ENCODE measurements at regions of chr17 and their contacts with region 1.

Region 1: GRCh38 chr17:41322094-41322902 is 6.8 kb upstream of the KRTAP17-1 start:
- DNase-seq: no peak
- ATAC-seq: peak; percentile 81
- H3K4me3 Mint-ChIP-seq: no peak overlapping the region
- H3K27ac Mint-ChIP-seq: no peak overlapping the region
- H3K4me1 Mint-ChIP-seq: peaks cover 28% of the 10 kb centered on the region
- H3K27me3 Mint-ChIP-seq: no peaks in the 10 kb centered on the region

Region 2: DNA sequence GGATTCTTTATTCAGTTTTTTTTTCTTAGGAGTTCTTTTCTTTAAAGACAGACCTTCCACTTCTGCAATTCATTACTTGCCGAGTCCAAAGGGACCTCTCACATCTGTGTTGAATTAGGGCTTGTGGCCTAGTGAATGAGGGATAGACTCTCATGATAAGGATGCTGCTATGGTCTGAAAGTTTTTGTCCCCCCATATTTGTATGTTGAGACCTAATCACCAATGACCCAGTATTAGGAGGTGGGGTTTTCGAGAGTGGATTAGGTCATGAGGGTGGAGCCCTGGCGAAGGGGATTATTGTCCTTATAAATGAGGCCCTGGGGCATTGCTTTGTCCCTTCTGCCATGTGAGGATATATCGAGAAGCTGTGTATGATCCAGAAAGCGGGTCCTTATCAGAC is 464.8 kb before region 1 on chr17:
- CTCF ChIA-PET with region 1: interaction called, 3 read pairs
- POLR2A ChIA-PET with region 1: no interaction called
- intact Hi-C with region 1: loop called in 1 of 2 experiments (anchors 5 kb)
- DNase-seq: no peak
- ATAC-seq: no peak
- H3K4me3 Mint-ChIP-seq: no peak overlapping the region
- H3K27ac Mint-ChIP-seq: no peak overlapping the region
- H3K4me1 Mint-ChIP-seq: no peaks in the 10 kb centered on the region
- H3K27me3 Mint-ChIP-seq: peaks cover 14% of the 10 kb centered on the region

Region 3: DNA sequence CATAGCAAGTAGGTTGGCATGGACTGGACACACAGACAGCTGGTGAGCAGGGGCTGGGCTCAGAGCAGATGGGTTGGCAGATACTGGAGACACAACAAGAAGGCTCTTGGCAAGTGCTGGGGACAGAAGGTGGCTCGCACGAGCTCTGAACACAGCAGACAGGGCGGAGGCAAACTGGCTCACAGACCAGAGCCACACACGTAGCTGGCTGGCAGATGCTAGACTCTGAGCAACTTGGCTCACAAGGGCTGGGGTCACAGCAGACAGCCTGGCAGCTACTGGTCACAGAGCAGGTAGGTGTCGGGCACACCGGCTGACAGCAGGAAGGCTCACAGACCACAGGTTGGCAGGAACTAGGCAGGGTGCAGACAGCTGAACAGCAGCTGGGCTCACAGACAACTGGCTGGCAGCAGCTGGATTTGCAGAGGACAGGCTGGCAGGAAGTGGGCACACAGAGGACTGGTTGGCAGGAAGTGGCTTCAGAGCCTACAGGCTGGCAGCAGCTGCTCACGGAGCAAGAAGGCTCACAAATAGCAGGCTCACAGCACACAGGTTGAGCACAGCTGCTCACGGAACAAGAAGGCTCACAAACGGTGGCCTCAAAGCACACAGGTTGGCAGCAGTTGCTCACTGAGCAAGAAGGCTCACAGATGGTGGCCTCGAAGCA is 13.9 kb before region 1 on chr17:
- CTCF ChIA-PET with region 1: interaction called, 24 read pairs
- POLR2A ChIA-PET with region 1: interaction called, 5 read pairs
- intact Hi-C with region 1: no loop called
- DNase-seq: peak; percentile 76
- ATAC-seq: peak; percentile 80
- H3K4me3 Mint-ChIP-seq: peak overlapping the region; percentile 47
- H3K27ac Mint-ChIP-seq: peak overlapping the region; percentile 83
- H3K4me1 Mint-ChIP-seq: peaks cover 52% of the 10 kb centered on the region
- H3K27me3 Mint-ChIP-seq: no peaks in the 10 kb centered on the region

Region 4: DNA sequence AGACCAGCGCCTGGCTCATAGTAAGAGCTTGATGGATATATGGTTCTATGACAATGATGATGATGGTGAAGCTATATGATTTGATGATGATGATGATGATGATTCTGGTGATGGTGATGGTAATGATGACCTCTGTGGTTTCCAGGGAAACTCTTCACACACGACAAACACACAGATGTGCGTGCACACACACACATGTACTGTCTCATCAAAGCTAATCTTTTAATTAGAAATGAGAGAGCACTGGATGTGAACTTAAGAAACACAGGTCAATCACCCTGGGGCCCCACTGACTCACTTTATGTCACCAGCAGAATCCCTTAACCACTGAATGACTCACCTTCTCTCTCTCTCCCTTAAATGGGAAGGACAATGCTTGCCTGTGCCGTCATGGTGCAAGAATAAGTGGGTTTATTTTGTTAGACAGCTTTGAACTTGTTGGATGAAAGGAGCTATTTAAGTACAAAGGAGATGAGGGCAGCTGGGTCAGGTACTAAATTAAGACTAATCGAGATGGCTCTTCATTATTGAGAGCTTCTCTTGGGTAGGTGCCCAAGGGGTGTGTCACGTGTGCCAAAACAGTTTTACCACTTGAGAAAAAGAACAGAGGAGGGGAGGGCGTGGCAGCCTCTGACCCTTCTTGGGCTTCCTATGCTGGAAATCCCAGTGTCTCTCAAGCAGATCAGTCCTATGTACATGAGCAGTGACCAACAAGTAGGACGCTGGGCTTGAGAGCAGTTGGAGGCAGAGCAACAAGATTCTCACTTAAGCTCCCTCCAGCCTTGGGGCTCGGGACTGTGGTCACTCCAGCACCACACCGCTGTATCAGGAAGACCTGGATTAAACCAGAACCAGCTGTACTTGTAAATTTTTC is 81.7 kb after region 1 on chr17:
- CTCF ChIA-PET with region 1: interaction called, 10 read pairs
- POLR2A ChIA-PET with region 1: no interaction called
- intact Hi-C with region 1: no loop called
- DNase-seq: peak; percentile 80
- ATAC-seq: peak; percentile 91
- H3K4me3 Mint-ChIP-seq: peak overlapping the region; percentile 10
- H3K27ac Mint-ChIP-seq: peak overlapping the region; percentile 87
- H3K4me1 Mint-ChIP-seq: peaks cover 37% of the 10 kb centered on the region
- H3K27me3 Mint-ChIP-seq: peaks cover 2% of the 10 kb centered on the region

Measured in activated CD4-positive, alpha-beta T cell treated with anti-CD3 and anti-CD28 coated beads for 36 hours (primary cell).